Activated CD8-positive, alpha-beta T cell treated with anti-CD3 and anti-CD28 coated beads, Interleukin-2, amount 10 ng/mL, durations not matched to agents 7 days and 5 days (primary cell): ENCODE measurements at regions of chr6 and their contacts with region 1.

Region 1: DNA sequence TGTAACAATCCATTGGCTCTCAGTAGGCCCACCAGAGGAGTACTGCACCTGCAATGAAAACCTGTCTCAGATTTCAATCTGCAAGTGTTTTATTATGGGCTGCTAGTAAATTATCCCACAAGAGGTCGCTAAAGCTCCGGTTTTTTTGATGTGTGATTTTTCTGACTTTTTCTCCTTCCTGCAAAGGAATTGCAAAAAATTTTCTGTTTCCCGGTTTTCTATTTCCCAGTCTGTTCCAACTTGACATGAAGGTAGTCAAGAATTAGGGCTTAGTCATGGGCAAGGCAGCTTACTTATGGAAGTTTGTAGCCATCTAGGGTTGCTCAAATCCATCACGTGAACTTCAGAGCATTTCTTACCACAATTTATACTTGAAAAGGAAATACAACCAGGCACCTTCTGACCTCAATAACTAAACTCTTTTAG is 38.5 kb upstream of the AHI1 start:
- DNase-seq: peak; percentile 48
- ATAC-seq: peak; percentile 72
- H3K4me3 Mint-ChIP-seq: peak overlapping the region; percentile 46
- H3K27ac Mint-ChIP-seq: peak overlapping the region; percentile 43
- H3K4me1 Mint-ChIP-seq: peaks cover 45% of the 10 kb centered on the region
- H3K27me3 Mint-ChIP-seq: no peaks in the 10 kb centered on the region

Region 2: DNA sequence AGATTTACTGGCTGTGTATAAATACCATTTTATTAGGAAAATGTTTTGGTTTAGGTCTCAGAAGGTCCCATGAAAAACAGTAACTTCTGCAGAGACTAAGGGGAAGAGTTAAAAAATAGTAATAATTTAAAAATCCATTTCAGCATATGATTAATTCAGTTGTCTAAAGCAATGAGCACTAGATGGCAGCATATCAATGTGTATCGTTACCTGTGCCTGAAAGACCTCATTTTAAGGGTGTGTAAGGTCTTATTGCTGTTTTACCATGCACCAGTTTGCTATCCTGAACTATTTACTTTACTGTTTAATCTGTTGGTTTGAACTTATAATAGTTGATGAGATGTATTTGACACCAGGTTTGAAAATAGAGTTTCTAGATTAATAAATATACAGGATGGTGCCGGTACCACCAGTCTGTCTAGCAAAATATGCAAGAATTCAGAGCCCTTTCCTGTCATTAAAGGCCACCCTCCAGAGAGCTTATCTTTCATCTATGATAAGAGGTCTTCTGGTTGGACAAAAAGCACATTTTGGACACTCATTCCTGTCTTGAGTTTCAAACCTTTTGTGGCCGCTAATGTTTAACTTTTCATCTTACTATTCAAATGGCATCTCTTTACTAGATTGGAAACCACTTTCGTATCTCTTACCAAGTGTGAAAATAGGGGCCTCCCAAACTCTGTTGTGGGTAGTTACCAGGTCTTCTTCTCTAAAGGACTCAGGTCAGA is 29.6 kb before region 1 on chr6:
- CTCF ChIA-PET with region 1: interaction called, 37 read pairs
- POLR2A ChIA-PET with region 1: no interaction called
- DNase-seq: peak; percentile 41
- ATAC-seq: peak; percentile 93
- H3K4me3 Mint-ChIP-seq: no peak overlapping the region
- H3K27ac Mint-ChIP-seq: peak overlapping the region; percentile 26
- H3K4me1 Mint-ChIP-seq: peaks cover 8% of the 10 kb centered on the region
- H3K27me3 Mint-ChIP-seq: no peaks in the 10 kb centered on the region

Region 3: GRCh38 chr6:135555550-135555949 is 19.5 kb after region 1 on chr6:
- CTCF ChIA-PET with region 1: interaction called, 12 read pairs
- POLR2A ChIA-PET with region 1: no interaction called
- DNase-seq: no peak
- ATAC-seq: no peak
- H3K4me3 Mint-ChIP-seq: no peak overlapping the region
- H3K27ac Mint-ChIP-seq: no peak overlapping the region
- H3K4me1 Mint-ChIP-seq: peaks cover 5% of the 10 kb centered on the region
- H3K27me3 Mint-ChIP-seq: peaks cover 7% of the 10 kb centered on the region

Region 4: DNA sequence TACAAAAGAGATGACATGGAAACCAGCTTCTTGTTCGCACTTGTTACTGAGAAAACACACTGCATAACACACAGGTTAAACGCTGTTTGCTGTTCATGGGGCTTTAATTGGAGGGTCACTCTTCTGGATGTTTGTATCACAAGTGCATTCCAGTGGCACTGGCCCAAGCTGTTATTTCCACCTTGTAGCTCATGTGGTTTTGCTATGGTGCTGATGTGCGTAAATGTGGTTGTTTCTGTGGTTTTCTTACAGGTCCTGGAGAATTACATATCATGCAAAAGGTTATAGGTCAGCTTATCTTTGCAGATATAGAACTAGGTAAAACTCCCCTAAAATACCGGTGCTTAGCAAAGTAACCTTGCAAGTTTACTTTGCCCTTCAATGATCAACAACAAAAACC is 50.8 kb after region 1 on chr6:
- CTCF ChIA-PET with region 1: interaction called, 12 read pairs
- POLR2A ChIA-PET with region 1: interaction called, 3 read pairs
- DNase-seq: peak; percentile 53
- ATAC-seq: peak; percentile 75
- H3K4me3 Mint-ChIP-seq: peak overlapping the region; percentile 39
- H3K27ac Mint-ChIP-seq: peak overlapping the region; percentile 78
- H3K4me1 Mint-ChIP-seq: peaks cover 47% of the 10 kb centered on the region
- H3K27me3 Mint-ChIP-seq: no peaks in the 10 kb centered on the region

Region 5: GRCh38 chr6:135667691-135668455 is 131.9 kb after region 1 on chr6:
- CTCF ChIA-PET with region 1: interaction called, 18 read pairs
- POLR2A ChIA-PET with region 1: no interaction called
- DNase-seq: no peak
- ATAC-seq: no peak
- H3K4me3 Mint-ChIP-seq: no peak overlapping the region
- H3K27ac Mint-ChIP-seq: no peak overlapping the region
- H3K4me1 Mint-ChIP-seq: peaks cover 2% of the 10 kb centered on the region
- H3K27me3 Mint-ChIP-seq: peaks cover 3% of the 10 kb centered on the region

Region 6: GRCh38 chr6:135675862-135676261 is 139.9 kb after region 1 on chr6:
- CTCF ChIA-PET with region 1: interaction called, 22 read pairs
- POLR2A ChIA-PET with region 1: no interaction called
- DNase-seq: peak; percentile 58
- ATAC-seq: peak; percentile 55
- H3K4me3 Mint-ChIP-seq: no peak overlapping the region
- H3K27ac Mint-ChIP-seq: no peak overlapping the region
- H3K4me1 Mint-ChIP-seq: peaks cover 27% of the 10 kb centered on the region
- H3K27me3 Mint-ChIP-seq: no peaks in the 10 kb centered on the region

Region 7: GRCh38 chr6:135851442-135852271 is 315.7 kb after region 1 on chr6 and contains the start of gene PDE7B:
- CTCF ChIA-PET with region 1: interaction called, 11 read pairs
- POLR2A ChIA-PET with region 1: interaction called, 6 read pairs
- DNase-seq: peak; percentile 61
- ATAC-seq: peak; percentile 97
- H3K4me3 Mint-ChIP-seq: peak within 1 kb of the TSS; percentile 66
- H3K27ac Mint-ChIP-seq: peak within 1 kb of the TSS; percentile 70
- H3K4me1 Mint-ChIP-seq: peaks cover 13% of the 10 kb centered on the region
- H3K27me3 Mint-ChIP-seq: no peaks in the 10 kb centered on the region
- total RNA-seq, gene PDE7B: 0.29 to 0.34 TPM